ENCODE measurements at regions of chr3 and their contacts with region 1.

Region 1: GRCh38 chr3:185942907-185943759 is 5.3 kb upstream of the TRA2B start:
- DNase-seq: peak; percentile 78
- H3K4me3 ChIP-seq: peak overlapping the region in 1 of 2 experiments; percentile 43; a peak in 1 of 4 replicates
- H3K27ac ChIP-seq: no peak overlapping the region
- H3K4me1 ChIP-seq: peaks cover 0 to 3% of the 10 kb centered on the region in 2 experiments; a peak in 1 of 4 replicates
- H3K27me3 ChIP-seq: no peaks in the 10 kb centered on the region
- CTCF ChIP-seq: peak; percentile 99
- EP300 ChIP-seq: no peak
- RAD21 ChIP-seq: peak; percentile 57

Region 2: GRCh38 chr3:185912929-185913901 is 29.9 kb before region 1 on chr3:
- CTCF ChIA-PET with region 1: interaction called, 11 read pairs
- POLR2A ChIA-PET with region 1: interaction called, 5 read pairs
- DNase-seq: no peak
- H3K4me3 ChIP-seq: no peak overlapping the region
- H3K27ac ChIP-seq: peak overlapping the region in 1 of 2 experiments; percentile 6; a peak in 1 of 4 replicates
- H3K4me1 ChIP-seq: no peaks in the 10 kb centered on the region; a peak in 1 of 4 replicates
- H3K27me3 ChIP-seq: no peaks in the 10 kb centered on the region
- CTCF ChIP-seq: no peak
- EP300 ChIP-seq: no peak
- RAD21 ChIP-seq: no peak

Region 3: GRCh38 chr3:185954366-185954723 is 11.2 kb after region 1 on chr3:
- CTCF ChIA-PET with region 1: interaction called, 53 read pairs
- POLR2A ChIA-PET with region 1: interaction called, 3 read pairs
- DNase-seq: no peak
- H3K4me3 ChIP-seq: no peak overlapping the region
- H3K27ac ChIP-seq: no peak overlapping the region
- H3K4me1 ChIP-seq: no peaks in the 10 kb centered on the region; a peak in 1 of 4 replicates
- H3K27me3 ChIP-seq: no peaks in the 10 kb centered on the region
- CTCF ChIP-seq: no peak
- EP300 ChIP-seq: no peak
- RAD21 ChIP-seq: no peak

Region 4: DNA sequence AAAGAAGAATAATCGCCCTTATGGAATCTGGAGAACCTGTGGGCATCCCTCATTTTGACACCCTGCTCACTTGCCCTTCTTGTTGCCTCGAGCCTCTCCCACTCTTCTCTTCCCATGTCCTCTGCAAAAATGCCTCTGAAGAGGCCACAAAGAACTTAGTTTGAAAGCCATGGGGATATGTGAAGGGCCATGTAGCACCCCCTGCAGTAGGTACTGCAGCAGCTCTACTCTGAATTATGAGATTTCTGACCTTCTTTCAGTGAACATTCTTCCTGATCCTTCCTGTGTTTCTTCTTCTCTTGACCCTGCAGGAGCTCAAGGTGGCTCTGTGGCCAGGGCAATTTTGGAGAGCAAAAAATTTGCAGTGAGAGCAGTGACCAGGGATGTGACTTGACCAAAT is 25.0 kb after region 1 on chr3:
- CTCF ChIA-PET with region 1: interaction called, 10 read pairs
- POLR2A ChIA-PET with region 1: no interaction called
- DNase-seq: no peak
- H3K4me3 ChIP-seq: no peak overlapping the region
- H3K27ac ChIP-seq: no peak overlapping the region
- H3K4me1 ChIP-seq: no peaks in the 10 kb centered on the region
- H3K27me3 ChIP-seq: no peaks in the 10 kb centered on the region
- CTCF ChIP-seq: no peak
- EP300 ChIP-seq: no peak
- RAD21 ChIP-seq: no peak

Region 5: DNA sequence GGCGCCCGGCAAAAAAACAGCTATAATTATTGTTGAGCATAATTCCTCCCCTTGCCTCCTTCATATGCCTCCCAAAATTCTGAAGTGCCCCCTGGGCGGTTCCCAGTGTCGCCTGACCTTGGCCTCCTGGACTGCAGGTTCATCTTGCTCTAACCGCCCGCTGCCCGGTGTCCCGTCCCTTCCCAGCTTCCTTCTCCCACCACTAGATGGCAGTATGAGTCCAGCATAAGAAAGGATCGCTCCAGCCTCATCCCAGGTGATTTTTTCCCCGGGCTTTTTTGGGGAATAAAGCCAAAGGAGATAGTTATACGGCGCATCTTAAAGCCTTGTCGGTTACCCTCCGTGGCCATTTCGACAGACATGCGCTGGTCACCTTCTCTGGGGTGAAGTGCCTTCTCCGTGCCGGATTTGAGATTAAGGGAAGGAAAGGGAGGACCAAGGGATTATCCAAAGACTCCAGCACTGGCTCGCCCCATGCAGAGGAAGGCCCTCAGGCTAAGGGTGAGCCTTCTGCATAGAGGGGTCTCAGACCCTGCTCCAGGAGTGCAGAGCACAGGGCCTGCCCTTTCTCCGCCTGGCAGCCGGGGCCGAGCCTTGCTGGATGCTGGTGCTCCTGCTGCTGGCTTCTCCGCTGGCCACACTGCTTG is 40.5 kb after region 1 on chr3:
- CTCF ChIA-PET with region 1: interaction called, 34 read pairs
- POLR2A ChIA-PET with region 1: no interaction called
- DNase-seq: peak; percentile 83
- H3K4me3 ChIP-seq: peak overlapping the region in 1 of 2 experiments; percentile 21; a peak in 1 of 4 replicates
- H3K27ac ChIP-seq: no peak overlapping the region
- H3K4me1 ChIP-seq: peaks cover 0 to 3% of the 10 kb centered on the region in 2 experiments; a peak in 1 of 4 replicates
- H3K27me3 ChIP-seq: no peaks in the 10 kb centered on the region
- CTCF ChIP-seq: peak; percentile 90
- EP300 ChIP-seq: no peak
- RAD21 ChIP-seq: peak; percentile 98

Region 6: DNA sequence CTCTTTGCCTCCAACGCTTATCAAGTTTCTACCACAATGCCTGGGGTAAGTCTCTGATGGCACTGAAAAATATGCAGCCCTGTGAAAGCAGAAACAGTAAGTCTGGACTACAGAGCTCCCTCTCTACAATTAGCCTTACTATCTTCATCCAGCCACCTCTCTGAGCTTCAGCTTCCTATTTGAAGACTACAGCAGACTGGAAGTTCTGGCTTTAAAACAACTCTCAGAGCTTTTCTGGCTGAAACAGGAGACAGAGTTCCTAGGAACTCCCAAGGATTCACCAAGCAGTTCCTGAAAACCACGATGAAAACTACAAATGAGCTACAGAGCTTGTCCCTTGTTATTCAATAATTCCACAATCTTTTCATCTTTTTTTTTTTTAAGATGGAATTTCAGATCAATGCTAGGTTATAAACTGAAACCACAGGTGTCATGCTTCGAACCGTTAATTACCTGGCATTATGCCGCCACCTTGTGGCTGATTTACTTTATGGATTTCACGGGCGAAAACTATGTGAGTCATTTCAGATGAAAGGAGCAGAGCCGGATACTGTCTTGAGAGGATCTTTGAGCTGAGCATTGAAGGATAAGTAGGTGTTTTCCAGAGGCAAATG is 597.2 kb after region 1 on chr3:
- CTCF ChIA-PET with region 1: interaction called, 11 read pairs
- POLR2A ChIA-PET with region 1: no interaction called
- DNase-seq: peak; percentile 49
- H3K4me3 ChIP-seq: peak overlapping the region in 1 of 2 experiments; percentile 31; a peak in 2 of 4 replicates
- H3K27ac ChIP-seq: peak overlapping the region in 1 of 2 experiments; percentile 85; a peak in 2 of 4 replicates
- H3K4me1 ChIP-seq: peaks cover 12 to 20% of the 10 kb centered on the region in 2 experiments
- H3K27me3 ChIP-seq: no peaks in the 10 kb centered on the region
- CTCF ChIP-seq: peak; percentile 88
- EP300 ChIP-seq: no peak
- RAD21 ChIP-seq: peak; percentile 94